Dorsolateral prefrontal cortex (tissue), 120 donors: ENCODE measurements at regions of chr14 and their contacts with region 1.

Region 1: DNA sequence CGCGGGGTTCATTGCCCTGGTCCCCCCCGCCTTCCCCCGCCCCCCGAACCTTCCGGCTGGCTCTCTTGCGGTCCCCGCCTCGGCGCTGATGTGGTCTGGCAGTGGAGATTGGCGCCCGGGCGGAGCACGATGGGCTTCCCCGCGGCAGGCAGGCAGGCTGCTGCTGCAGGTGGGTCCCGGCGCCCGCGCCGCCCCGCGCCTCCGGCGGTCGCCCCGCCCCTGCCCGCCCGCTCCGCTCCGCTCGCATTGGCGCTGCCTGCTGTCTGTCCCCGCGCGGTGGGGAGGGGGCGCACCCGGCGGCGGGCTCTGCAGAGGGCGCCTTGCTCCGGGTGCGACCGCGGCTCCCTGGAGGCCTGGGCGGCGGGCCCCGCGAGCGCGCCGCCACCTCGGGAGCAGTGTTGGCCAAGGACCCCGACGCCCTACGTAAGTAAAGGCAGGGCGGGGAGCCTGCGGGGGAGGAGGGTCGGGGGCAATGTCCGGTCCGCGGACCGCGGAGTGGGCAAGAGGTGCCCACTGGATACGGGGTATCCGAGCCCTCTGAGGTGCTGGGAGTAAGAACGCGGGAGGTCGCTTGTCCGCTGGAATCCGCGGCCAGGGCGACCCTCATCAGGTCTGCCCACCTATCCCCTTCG is at the start of gene AKAP5:
- DNase-seq: peak; percentile 52 to 85 (median 71)
- H3K4me3 ChIP-seq: peak within 1 kb of the TSS; percentile 55 to 92 (median 79)
- H3K27ac ChIP-seq: peak within 1 kb of the TSS in 58 of 59 donors; percentile 10 to 94 (median 85)
- H3K27me3 ChIP-seq: no peaks in the 10 kb centered on the region
- CTCF ChIP-seq: peak in 11 of 56 donors; percentile 6 to 59 (median 17)
- total RNA-seq, gene AKAP5: 4.0 to 42.2 (median 22.1) TPM

Region 2: DNA sequence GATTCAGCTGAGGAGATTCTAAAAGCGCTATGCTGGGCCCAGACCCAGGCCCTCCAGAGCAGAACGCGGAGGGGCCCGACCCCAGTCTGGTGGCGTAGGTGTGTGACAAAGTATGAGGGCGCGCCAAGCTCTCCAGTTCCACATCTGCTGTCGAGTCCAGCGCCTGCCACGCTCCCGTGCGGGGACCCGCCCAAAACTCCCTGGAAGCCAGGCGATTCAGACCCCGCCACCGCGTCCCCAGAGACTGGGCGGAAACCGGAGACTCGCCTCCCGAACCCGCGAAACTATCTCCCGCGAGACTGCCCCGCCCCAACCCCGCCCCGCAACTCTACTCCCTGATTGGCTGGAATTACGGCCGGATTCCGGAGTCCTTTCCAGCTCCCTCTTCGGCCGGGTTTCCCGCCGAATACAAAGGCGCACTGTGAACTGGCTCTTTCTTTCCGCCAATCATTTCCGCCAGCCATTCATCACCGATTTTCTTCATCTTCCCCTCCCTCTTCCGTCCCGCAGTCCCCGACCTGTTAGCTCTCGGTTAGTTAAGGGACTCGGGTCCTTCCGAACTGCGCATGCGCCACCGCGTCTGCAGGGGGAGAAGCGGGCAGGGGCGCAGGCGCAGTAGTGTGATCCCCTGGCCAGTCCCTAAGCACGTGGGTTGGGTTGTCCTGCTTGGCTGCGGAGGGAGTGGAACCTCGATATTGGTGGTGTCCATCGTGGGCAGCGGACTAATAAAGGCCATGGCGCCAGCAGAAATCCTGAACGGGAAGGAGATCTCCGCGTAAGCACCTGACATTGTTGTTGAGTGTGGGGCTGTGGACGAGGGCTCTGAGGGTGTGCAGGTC is 77.4 kb before region 1 on chr14 and contains the start of gene MTHFD1:
- intact Hi-C with region 1: loop called in 1 of 2 experiments (anchors 5 kb)
- DNase-seq: peak; percentile 92 to 98 (median 97)
- H3K4me3 ChIP-seq: peak within 1 kb of the TSS; percentile 55 to 98 (median 86)
- H3K27ac ChIP-seq: peak within 1 kb of the TSS in 56 of 59 donors; percentile 4 to 92 (median 82)
- H3K27me3 ChIP-seq: no peaks in the 10 kb centered on the region
- CTCF ChIP-seq: peak in 13 of 56 donors; percentile 6 to 37 (median 21)
- total RNA-seq, gene MTHFD1: 41.0 to 93.1 (median 63.8) TPM

Region 3: GRCh38 chr14:64493455-64493854 is 28.1 kb after region 1 on chr14:
- intact Hi-C with region 1: no loop called
- DNase-seq: no peak
- H3K4me3 ChIP-seq: no peak overlapping the region
- H3K27ac ChIP-seq: peak overlapping the region in 10 of 59 donors; percentile 2 to 55 (median 16)
- H3K27me3 ChIP-seq: no peaks in the 10 kb centered on the region
- CTCF ChIP-seq: no peak